ENCODE measurements at regions of chr3 and their contacts with region 1.

Region 1: DNA sequence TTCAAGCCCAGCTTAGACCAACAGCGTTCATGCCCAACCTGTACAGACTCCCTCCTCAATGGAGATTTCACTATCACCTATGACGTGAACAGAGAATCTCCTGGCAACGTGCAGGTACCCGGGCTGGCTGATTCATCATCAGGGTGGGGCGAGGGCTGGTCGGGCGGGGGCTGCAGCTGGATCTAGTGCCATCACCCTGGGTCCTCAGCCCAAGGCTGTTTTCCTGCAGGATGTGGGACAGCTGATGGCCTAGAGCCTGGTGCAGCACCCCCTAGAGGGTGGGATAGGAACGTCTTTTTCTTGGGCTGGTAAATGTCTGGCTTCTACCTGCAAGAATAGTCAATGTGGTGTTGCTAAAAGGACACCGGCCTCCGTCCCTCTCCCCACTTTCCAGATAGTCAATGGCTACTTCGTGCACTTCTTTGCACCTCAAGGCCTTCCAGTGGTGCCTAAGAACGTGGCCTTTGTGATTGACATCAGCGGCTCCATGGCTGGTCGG is 4.4 kb downstream of the ITIH3 start:
- DNase-seq: peak; percentile 44 to 87
- H3K4me3 ChIP-seq: no peak overlapping the region
- H3K27ac ChIP-seq: no peak overlapping the region
- H3K4me1 ChIP-seq: no peaks in the 10 kb centered on the region
- H3K27me3 ChIP-seq: no peaks in the 10 kb centered on the region
- CTCF ChIP-seq: peak in 2 of 3 experiments; percentile 74 to 86; a peak in 3 of 4 replicates
- EP300 ChIP-seq: no peak
- POLR2A ChIP-seq: no peak
- RAD21 ChIP-seq: peak; percentile 60 to 64

Region 2: GRCh38 chr3:52670621-52671521 is 128.2 kb before region 1 on chr3:
- CTCF ChIA-PET with region 1: no interaction called
- POLR2A ChIA-PET with region 1: no interaction called
- DNase-seq: no peak
- H3K4me3 ChIP-seq: no peak overlapping the region
- H3K27ac ChIP-seq: no peak overlapping the region
- H3K4me1 ChIP-seq: 0 out of 7 replicates have a peak, but pooled peaks cover 0 to 2% (median 0%) of the 10 kb centered on the region in 4 experiments
- H3K27me3 ChIP-seq: no peaks in the 10 kb centered on the region
- CTCF ChIP-seq: no peak
- EP300 ChIP-seq: no peak
- POLR2A ChIP-seq: no peak
- RAD21 ChIP-seq: no peak

Region 3: DNA sequence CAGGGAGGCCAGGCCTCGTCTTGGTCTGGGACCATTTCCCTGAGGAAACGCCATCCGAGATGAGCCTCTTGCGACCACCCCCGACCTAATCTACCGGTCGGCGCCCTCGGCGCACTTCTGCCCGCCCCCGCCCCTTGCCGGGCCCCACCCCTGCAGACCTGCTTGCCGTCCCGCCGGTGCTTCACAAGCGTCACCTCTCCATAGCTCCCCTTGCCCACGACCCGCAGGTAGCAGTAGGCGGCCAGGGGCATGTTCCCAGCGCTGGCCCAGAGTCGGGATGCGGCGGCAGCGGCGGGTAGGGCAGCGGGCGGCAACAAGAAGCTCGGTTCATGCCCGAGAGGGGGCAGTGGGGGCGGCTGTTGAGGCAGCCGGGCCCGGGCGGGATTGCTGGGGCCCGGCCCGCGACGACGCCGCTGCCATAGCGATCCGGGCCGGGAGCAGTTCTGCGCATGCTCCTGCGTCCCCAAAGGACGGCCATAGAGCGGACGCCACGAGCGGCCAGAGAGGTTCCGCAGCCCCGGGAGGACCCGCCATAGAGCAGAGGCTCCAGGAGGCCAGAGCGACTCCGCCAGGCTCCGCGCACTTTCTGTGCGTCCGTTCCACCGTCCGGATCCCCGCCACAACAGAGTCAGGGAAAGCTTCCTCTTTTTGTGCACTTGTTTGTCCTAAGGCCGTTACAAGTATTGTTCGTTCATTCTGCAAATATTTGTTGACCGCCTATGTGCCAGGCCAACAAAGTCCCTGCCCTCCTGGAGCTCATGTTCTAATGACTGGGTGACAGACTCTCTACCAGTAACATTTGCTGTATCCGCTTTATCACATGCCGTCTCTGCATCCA is 28.3 kb before region 1 on chr3 and contains the start of gene NEK4:
- CTCF ChIA-PET with region 1: interaction called, 28 read pairs
- POLR2A ChIA-PET with region 1: interaction called, 8 read pairs
- DNase-seq: peak; percentile 72 to 94
- H3K4me3 ChIP-seq: peak within 1 kb of the TSS; percentile 70 to 88 (median 78)
- H3K27ac ChIP-seq: peak within 1 kb of the TSS; percentile 86
- H3K4me1 ChIP-seq: peaks cover 0 to 2% (median 0%) of the 10 kb centered on the region in 4 experiments; a peak in 1 of 7 replicates
- H3K27me3 ChIP-seq: no peaks in the 10 kb centered on the region
- CTCF ChIP-seq: no peak
- EP300 ChIP-seq: no peak
- POLR2A ChIP-seq: peak; percentile 82 to 94
- RAD21 ChIP-seq: no peak
- total RNA-seq, gene NEK4: 39.5 and 40.0 TPM in 2 replicates

Region 4: DNA sequence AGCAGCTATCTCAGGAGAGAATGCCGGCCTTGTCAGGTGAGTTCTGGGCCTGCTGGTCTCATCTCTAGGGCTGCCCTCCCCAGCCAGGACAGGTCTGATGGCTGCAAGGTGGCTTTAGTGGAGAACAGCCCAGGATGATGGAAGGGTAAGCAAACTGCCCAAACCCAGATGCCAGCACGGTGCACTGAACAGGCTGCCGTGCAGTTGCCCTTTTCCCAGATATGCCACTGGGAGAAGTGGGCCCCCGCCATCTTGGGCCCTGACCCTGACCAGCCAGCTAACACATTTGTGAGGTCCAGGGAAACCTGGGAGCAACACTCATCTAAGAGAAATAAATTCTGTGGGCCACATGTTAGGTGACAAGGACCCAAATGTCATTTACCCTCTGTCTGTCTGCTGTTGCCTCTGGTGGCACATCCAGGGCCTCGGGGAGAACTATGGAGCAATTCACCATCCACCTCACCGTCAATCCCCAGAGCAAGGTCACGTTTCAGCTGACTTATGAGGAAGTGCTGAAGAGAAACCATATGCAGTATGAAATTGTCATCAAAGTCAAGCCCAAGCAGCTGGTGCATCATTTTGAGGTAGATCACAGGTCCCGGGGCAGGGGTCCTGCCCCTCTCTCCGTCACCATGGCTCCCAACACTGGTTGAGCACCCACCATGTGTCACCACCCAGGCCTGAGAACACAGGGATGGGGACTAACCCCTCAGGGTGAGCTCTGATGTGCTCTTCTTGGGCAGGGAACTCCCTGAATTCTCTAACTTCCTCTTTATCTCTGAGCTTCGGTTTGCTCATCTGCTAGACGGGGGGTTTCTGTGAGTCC is 19.8 kb before region 1 on chr3:
- CTCF ChIA-PET with region 1: interaction called, 28 read pairs
- POLR2A ChIA-PET with region 1: no interaction called
- DNase-seq: no peak
- H3K4me3 ChIP-seq: no peak overlapping the region
- H3K27ac ChIP-seq: no peak overlapping the region
- H3K4me1 ChIP-seq: peaks cover 0 to 8% (median 0%) of the 10 kb centered on the region in 4 experiments; a peak in 1 of 7 replicates
- H3K27me3 ChIP-seq: no peaks in the 10 kb centered on the region; a peak in 1 of 7 replicates
- CTCF ChIP-seq: no peak
- EP300 ChIP-seq: no peak
- POLR2A ChIP-seq: no peak
- RAD21 ChIP-seq: no peak

Region 5: DNA sequence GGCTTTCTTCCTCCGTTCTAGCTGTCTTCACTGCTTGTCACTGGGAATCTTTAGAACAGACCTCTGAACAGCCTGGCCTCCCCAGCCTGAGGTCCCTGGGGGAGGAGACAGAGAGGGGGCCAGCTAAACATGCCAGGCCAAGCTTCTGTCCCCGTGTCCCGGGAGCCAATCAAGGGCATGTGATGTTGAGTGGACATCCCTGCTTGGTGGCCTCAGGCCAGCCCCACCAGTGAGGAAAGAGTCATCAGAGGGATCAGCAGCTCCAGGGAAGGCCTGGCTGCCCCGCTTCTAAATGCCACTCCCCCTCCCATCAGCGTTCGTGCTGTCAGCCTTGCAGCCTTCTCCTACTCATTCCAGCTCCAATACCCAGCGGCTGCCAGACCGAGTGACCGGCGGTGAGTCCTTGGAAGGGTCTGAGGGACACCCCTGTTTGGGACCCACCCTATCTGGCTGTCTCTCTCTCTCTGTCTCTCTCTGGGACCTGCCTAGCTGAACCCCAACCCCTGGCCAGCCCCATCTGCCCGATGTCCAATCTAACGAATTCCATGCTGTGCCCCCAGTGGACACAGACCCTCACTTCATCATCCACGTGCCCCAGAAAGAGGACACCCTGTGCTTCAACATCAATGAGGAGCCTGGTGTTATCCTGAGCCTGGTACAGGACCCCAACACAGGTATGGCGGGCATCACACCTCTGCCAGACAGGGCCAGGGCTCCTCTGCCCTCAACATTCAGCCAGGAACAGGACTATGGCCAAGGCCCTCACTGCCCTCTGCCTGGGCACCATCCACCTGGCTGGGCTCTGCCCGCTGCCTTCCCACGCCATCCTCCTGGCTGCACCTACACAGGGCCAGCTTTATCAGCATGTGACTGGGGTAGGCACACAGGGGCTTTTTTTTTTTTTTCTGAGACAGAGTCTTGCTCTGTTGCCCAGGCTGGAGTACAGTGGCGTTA is 11.1 kb before region 1 on chr3:
- CTCF ChIA-PET with region 1: interaction called, 26 read pairs
- POLR2A ChIA-PET with region 1: interaction called, 4 read pairs
- DNase-seq: no peak
- H3K4me3 ChIP-seq: no peak overlapping the region
- H3K27ac ChIP-seq: no peak overlapping the region
- H3K4me1 ChIP-seq: no peaks in the 10 kb centered on the region
- H3K27me3 ChIP-seq: no peaks in the 10 kb centered on the region
- CTCF ChIP-seq: peak in 1 of 3 experiments; percentile 25; a peak in 1 of 4 replicates
- EP300 ChIP-seq: no peak
- POLR2A ChIP-seq: no peak
- RAD21 ChIP-seq: no peak

Region 6: GRCh38 chr3:52809662-52810377 is 10.8 kb after region 1 on chr3:
- CTCF ChIA-PET with region 1: interaction called, 86 read pairs
- POLR2A ChIA-PET with region 1: interaction called, 3 read pairs
- DNase-seq: no peak
- H3K4me3 ChIP-seq: no peak overlapping the region
- H3K27ac ChIP-seq: no peak overlapping the region
- H3K4me1 ChIP-seq: no peaks in the 10 kb centered on the region
- H3K27me3 ChIP-seq: no peaks in the 10 kb centered on the region; a peak in 1 of 7 replicates
- CTCF ChIP-seq: no peak
- EP300 ChIP-seq: no peak
- POLR2A ChIP-seq: no peak
- RAD21 ChIP-seq: no peak

Measured in H1 (cell line).